Activated T-helper 2 cell treated with anti-CD3 and anti-CD28 coated beads, Interferon-gamma antibody, Interleukin-2, Interleukin-4, amounts not matched to agents 10 μg/mL and 5 μg/mL and 100 μg/mL, durations not matched to agents 14 hours and 24 hours and 36 hours (primary cell): ENCODE measurements at regions of chr12 and their contacts with region 1.

Region 1: GRCh38 chr12:122500685-122501488 is at the start of gene ZCCHC8:
- DNase-seq: peak; percentile 96
- H3K4me3 Mint-ChIP-seq: peak within 1 kb of the TSS; percentile 96
- H3K27ac Mint-ChIP-seq: peak within 1 kb of the TSS; percentile 98
- H3K4me1 Mint-ChIP-seq: peaks cover 28% of the 10 kb centered on the region
- H3K27me3 Mint-ChIP-seq: no peaks in the 10 kb centered on the region
- total RNA-seq, gene ZCCHC8: 38.6 and 39.7 TPM in 2 replicates

Region 2: GRCh38 chr12:121802846-121803630 is 697.8 kb before region 1 on chr12:
- intact Hi-C with region 1: loop called (anchors 10 kb)
- DNase-seq: peak; percentile 90
- H3K4me3 Mint-ChIP-seq: peak overlapping the region; percentile 87
- H3K27ac Mint-ChIP-seq: peak overlapping the region; percentile 99
- H3K4me1 Mint-ChIP-seq: peaks cover 29% of the 10 kb centered on the region
- H3K27me3 Mint-ChIP-seq: no peaks in the 10 kb centered on the region

Region 3: GRCh38 chr12:122265931-122266771 is 234.7 kb before region 1 on chr12 and contains the start of gene VPS33A:
- intact Hi-C with region 1: loop called (anchors 1 kb)
- DNase-seq: peak; percentile 95
- H3K4me3 Mint-ChIP-seq: peak within 1 kb of the TSS; percentile 96
- H3K27ac Mint-ChIP-seq: peak within 1 kb of the TSS; percentile 99
- H3K4me1 Mint-ChIP-seq: peaks cover 7% of the 10 kb centered on the region
- H3K27me3 Mint-ChIP-seq: no peaks in the 10 kb centered on the region
- total RNA-seq, gene VPS33A: 25.3 and 26.8 TPM in 2 replicates

Region 4: DNA sequence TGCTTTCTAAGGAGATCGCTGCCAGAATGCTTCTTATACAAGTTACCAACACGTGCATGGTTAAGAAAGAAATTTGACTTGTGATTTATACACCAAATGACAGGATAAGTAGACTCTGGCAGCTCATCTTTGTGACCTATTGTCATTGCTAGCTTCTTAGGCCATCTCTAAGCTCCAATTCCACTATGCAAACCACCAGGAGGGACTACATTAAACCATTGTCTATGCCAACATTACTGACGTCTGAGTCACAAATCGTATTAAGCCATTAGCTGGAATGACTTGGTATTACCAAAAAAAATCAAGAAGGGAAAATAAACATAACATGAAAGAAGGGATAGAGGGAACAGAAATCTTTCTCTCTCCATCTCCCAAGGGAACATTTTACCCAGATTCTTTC is 218.8 kb before region 1 on chr12:
- intact Hi-C with region 1: no loop called
- DNase-seq: no peak
- H3K4me3 Mint-ChIP-seq: no peak overlapping the region
- H3K27ac Mint-ChIP-seq: no peak overlapping the region
- H3K4me1 Mint-ChIP-seq: no peaks in the 10 kb centered on the region
- H3K27me3 Mint-ChIP-seq: no peaks in the 10 kb centered on the region

Region 5: GRCh38 chr12:122366685-122367475 is 134.0 kb before region 1 on chr12:
- intact Hi-C with region 1: no loop called
- DNase-seq: no peak
- H3K4me3 Mint-ChIP-seq: no peak overlapping the region
- H3K27ac Mint-ChIP-seq: peak overlapping the region; percentile 21
- H3K4me1 Mint-ChIP-seq: peaks cover 16% of the 10 kb centered on the region
- H3K27me3 Mint-ChIP-seq: no peaks in the 10 kb centered on the region

Region 6: GRCh38 chr12:122427412-122427811 is 73.5 kb before region 1 on chr12:
- intact Hi-C with region 1: no loop called
- DNase-seq: no peak
- H3K4me3 Mint-ChIP-seq: no peak overlapping the region
- H3K27ac Mint-ChIP-seq: no peak overlapping the region
- H3K4me1 Mint-ChIP-seq: peaks cover 10% of the 10 kb centered on the region
- H3K27me3 Mint-ChIP-seq: peaks cover 2% of the 10 kb centered on the region

Region 7: GRCh38 chr12:122449353-122449752 is 51.5 kb before region 1 on chr12:
- intact Hi-C with region 1: loop called (anchors 2 kb)
- DNase-seq: no peak
- H3K4me3 Mint-ChIP-seq: no peak overlapping the region
- H3K27ac Mint-ChIP-seq: no peak overlapping the region
- H3K4me1 Mint-ChIP-seq: peaks cover 26% of the 10 kb centered on the region
- H3K27me3 Mint-ChIP-seq: no peaks in the 10 kb centered on the region

Region 8: GRCh38 chr12:122614839-122615238 is 114.0 kb after region 1 on chr12:
- intact Hi-C with region 1: no loop called
- DNase-seq: no peak
- H3K4me3 Mint-ChIP-seq: no peak overlapping the region
- H3K27ac Mint-ChIP-seq: no peak overlapping the region
- H3K4me1 Mint-ChIP-seq: no peaks in the 10 kb centered on the region
- H3K27me3 Mint-ChIP-seq: no peaks in the 10 kb centered on the region